Activated CD8-positive, alpha-beta T cell treated with anti-CD3 and anti-CD28 coated beads, Interleukin-2, amount 10 ng/mL, durations not matched to agents 7 days and 5 days (primary cell): ENCODE measurements at regions of chr14 and their contacts with region 1.

Region 1: DNA sequence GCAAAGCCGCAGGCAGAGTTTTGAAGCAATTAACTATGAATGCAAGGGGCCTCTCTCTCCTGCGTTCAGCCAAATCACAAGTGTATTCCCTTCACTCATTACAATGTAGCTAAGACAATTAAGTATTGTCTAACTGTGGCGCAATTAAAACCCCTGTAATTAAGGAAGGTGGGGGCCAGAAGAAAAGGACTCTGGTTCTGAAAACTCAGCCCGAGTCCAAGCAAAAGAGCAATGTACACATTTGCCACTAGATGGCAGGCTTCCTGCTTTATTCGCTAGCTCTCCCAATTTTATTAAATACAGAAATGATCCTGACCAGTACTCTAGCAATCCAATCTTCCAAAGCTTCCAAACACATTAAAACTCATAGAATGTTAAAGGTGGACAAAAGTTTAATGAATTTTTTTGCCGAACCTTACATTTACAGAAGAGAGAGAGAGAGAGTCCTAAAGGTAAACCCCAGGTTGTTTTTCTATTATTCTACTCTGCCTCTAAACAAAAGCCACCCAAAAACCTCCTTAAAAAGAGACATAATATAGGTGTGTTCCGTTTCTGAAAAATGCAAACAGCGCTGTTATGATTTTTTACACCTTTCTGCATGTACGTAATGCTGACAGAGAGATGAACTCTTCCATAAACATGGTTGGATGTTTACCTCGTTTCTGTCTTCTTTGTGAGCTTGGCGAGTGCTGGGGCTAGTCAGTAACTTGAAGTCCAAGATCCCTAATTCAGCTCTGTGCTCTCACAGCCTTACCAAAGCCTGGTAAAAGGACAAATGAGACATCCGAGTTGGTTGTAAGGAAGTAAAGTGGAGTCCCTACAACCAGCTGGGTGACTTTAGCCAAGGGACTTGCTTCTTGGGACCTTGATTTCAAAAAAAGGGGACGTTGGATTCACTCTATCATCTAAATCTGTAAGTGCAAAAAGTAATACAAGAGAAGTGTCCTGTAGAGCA is 50.9 kb upstream of the VASH1 start:
- DNase-seq: peak; percentile 51
- ATAC-seq: no peak
- H3K4me3 Mint-ChIP-seq: no peak overlapping the region
- H3K27ac Mint-ChIP-seq: no peak overlapping the region
- H3K4me1 Mint-ChIP-seq: no peaks in the 10 kb centered on the region
- H3K27me3 Mint-ChIP-seq: peaks cover 11% of the 10 kb centered on the region

Region 2: DNA sequence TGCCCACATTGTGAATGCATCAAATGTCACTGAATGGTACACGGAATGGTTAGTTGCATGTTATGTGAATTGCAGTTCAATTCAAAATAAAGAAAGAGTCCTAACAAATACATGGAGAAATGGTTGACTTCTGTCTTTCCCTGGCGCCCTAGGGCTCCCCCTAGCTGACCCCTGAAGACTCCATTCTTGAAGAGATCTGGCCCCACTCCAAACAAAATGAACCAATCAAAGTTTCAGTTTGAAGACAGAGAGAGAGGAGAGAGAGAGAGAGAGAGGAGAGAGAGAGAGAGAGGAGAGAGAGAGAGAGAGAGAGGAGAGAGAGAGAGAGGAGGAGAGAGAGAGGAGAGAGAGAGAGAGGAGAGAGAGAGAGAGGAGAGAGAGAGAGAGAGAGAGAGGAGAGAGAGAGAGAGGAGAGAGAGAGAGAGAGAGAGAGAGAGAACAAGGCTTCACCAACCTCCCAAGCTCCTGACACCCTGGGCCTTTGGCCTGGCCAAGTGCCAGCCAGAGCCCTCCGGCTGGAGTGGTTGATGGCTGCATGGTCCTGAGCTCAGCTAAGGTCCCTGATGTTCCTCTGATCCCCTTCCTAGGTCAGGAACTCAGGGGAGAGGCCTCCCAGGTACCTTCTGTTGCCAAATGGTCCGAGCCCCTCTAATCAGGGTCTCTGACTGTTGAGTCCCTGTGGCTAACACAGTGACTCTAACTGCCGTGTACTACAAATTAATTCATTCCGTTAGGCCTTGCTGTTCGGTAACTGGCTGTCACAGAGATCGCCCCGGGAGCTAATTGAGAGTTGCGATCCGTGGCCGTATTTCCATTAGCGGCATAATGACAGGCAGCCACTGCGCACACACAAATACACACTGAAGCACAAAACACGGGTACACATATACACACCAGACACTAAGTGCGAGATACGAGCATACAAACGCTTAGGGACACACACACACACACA is 145.6 kb before region 1 on chr14:
- CTCF ChIA-PET with region 1: no interaction called
- POLR2A ChIA-PET with region 1: no interaction called
- DNase-seq: no peak
- ATAC-seq: no peak
- H3K4me3 Mint-ChIP-seq: no peak overlapping the region
- H3K27ac Mint-ChIP-seq: no peak overlapping the region
- H3K4me1 Mint-ChIP-seq: no peaks in the 10 kb centered on the region
- H3K27me3 Mint-ChIP-seq: peaks cover 3% of the 10 kb centered on the region

Region 3: DNA sequence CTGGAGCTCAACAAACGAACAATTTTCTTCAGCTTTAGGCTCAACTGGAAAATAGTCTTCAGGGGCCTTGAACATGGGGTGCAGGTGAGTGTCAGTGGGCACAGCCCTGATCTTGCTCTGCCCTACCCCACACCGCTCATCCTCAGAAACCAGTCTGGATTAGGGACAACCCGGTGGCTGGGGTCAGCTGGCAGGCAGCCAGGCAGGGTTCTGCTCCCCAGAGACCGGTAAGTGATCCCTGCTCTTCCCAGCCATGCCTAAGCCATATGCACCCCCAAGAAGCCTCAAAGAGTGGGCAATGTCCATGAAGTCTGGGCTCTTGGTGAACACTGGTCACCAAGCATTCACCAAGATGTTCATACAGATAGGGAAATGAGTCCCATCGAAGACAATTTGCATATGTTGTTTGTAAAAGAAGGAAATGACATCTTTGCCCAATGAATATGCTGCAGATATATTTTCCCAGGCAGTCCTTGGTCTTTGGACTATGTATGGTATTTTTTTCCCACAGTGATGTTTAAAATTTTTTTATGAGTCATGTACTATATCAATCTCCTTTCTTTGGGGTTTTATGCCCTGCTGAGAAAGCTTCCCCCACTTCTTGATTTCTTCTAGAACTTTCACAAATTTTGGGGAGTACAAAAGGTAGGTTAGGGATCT is 13.0 kb before region 1 on chr14:
- CTCF ChIA-PET with region 1: interaction called, 10 read pairs
- POLR2A ChIA-PET with region 1: no interaction called
- DNase-seq: peak; percentile 6
- ATAC-seq: no peak
- H3K4me3 Mint-ChIP-seq: no peak overlapping the region
- H3K27ac Mint-ChIP-seq: no peak overlapping the region
- H3K4me1 Mint-ChIP-seq: no peaks in the 10 kb centered on the region
- H3K27me3 Mint-ChIP-seq: peaks cover 6% of the 10 kb centered on the region

Region 4: DNA sequence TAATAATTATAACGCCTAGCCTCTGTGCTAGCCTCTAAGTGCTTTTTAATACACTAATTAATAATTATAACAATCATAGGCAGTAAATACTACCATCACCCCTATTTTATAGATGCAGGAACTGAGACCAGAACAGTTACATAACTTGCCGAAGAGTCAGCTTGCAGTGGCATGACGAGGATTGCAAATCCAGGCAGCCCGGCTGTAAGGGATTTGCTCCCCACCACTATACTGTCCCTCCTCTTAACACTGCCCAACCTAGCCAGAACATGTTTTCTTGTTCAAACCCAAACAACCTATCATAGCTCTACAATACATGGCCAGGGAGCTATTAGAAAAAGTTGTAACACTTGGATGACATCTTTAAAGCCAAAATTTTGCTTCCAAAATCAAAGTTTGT is 17.1 kb after region 1 on chr14:
- CTCF ChIA-PET with region 1: interaction called, 18 read pairs
- POLR2A ChIA-PET with region 1: no interaction called
- DNase-seq: no peak
- ATAC-seq: no peak
- H3K4me3 Mint-ChIP-seq: no peak overlapping the region
- H3K27ac Mint-ChIP-seq: no peak overlapping the region
- H3K4me1 Mint-ChIP-seq: no peaks in the 10 kb centered on the region
- H3K27me3 Mint-ChIP-seq: peaks cover 35% of the 10 kb centered on the region

Region 5: DNA sequence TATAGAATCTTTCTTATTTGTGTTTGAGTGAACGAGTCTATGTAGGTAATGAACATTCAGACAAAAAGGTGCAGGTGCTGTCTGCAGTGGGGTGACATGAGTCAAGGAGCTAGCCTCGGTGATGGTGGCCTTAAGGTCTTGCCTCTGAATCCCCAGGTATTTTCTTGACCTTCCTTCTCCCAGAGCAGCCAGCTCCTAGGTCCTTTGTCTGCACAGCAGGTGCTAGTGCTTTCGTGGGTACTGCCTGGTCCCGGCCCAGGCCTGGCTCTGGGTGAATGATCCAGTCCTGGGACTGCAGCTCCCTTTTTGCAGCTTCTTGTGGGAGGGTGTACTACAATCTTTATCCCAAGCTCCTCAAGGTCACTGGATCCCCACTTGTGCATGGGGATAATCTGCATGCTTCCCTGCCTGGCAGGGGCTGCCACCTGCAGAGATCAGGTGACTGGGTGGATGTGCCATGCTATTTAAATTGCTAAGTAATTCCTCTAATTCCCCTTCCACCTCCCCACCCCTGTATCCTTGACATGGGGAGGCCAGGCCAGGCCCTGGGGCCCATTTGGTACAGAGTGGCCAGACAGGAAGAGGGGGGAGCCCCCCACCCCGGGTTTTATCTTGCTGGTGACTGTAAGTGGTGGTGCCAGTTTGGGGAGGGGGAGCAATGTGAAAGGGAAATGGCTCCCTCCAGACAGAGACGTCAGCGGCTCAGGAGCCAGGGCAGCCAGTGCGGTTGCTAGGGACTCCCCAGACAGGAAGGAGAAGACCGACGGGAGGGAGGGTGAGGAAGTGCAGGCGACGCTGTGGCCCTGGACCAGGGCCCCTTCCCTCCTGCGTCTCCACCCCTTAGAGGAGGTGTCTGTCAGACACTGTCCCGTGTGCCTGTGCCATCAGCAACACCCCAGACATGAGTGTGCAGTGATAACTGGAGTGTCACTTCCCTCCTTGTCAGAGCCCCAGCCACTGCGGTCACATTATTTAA is 57.6 kb after region 1 on chr14:
- CTCF ChIA-PET with region 1: interaction called, 12 read pairs
- POLR2A ChIA-PET with region 1: no interaction called
- DNase-seq: peak; percentile 73
- ATAC-seq: peak; percentile 97
- H3K4me3 Mint-ChIP-seq: peak overlapping the region; percentile 23
- H3K27ac Mint-ChIP-seq: peak overlapping the region; percentile 70
- H3K4me1 Mint-ChIP-seq: peaks cover 19% of the 10 kb centered on the region
- H3K27me3 Mint-ChIP-seq: peaks cover 20% of the 10 kb centered on the region

Region 6: DNA sequence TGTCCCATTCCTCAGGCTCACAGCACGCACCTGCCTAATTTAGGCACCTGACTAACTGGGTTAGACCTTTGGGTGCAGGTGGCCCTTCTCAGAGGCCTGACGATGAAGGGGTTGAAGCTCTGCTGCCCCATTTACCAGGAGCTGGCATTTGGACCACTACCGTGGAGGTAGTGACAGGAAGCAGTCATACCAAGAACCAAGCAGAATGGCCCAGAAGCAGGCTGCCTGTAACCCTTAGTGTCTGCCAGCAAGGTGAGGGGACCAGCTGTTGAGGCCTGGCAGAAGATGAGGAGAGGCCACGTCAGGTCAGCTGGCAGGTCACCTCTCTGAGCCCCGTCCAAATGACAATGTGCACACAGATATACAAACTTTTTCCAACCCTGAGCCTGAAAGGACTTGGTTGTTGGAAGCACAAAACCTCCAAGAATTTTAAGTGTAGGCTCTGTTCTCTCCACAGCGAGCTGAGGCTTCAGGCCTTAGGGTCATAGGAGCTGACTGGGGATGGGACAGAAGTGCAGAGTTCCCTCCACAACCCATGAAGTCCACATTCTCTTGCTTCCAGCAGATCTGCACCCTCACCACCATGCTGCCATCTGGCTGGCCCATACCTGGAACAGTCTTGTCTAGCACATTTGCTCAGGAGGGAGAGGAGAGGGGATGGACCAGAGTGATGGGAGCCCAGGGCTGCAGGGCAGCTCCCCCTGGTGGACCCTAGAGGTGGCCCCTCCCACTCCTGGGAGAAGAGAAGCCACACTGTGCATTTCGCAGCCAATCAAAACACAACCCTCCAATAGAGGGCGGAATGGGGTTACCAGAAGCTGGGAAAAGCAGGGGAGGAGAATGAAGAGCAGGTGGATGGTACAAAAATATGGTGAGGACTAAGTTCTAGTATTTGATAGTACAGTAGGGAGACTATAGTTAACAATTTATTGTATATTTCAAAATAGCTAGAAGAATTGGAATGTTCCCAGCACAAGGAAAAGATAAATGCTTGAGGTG is 74.2 kb after region 1 on chr14:
- CTCF ChIA-PET with region 1: interaction called, 104 read pairs
- POLR2A ChIA-PET with region 1: no interaction called
- DNase-seq: peak; percentile 68
- ATAC-seq: peak; percentile 81
- H3K4me3 Mint-ChIP-seq: no peak overlapping the region
- H3K27ac Mint-ChIP-seq: peak overlapping the region; percentile 12
- H3K4me1 Mint-ChIP-seq: peaks cover 50% of the 10 kb centered on the region
- H3K27me3 Mint-ChIP-seq: no peaks in the 10 kb centered on the region

Region 7: DNA sequence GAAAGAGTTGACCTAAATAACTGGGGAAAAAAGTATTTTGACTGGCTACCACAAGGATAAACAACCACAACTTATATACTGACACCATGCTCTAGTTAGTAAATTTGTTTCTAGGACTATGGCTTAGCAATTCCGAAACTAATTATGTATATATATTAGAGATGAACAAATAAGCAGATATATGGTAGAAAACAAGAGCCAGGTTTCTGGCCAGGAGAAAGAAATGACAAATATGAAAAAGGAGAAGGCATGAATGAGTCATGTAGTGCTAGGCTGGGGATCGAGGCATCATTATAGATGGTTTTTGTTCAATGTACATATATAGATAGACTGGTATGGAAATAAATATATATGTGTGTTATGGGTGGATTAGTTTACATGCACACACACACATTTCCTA is 110.4 kb after region 1 on chr14:
- CTCF ChIA-PET with region 1: no interaction called
- POLR2A ChIA-PET with region 1: no interaction called
- DNase-seq: no peak
- ATAC-seq: no peak
- H3K4me3 Mint-ChIP-seq: no peak overlapping the region
- H3K27ac Mint-ChIP-seq: no peak overlapping the region
- H3K4me1 Mint-ChIP-seq: no peaks in the 10 kb centered on the region
- H3K27me3 Mint-ChIP-seq: peaks cover 12% of the 10 kb centered on the region

Region 8: DNA sequence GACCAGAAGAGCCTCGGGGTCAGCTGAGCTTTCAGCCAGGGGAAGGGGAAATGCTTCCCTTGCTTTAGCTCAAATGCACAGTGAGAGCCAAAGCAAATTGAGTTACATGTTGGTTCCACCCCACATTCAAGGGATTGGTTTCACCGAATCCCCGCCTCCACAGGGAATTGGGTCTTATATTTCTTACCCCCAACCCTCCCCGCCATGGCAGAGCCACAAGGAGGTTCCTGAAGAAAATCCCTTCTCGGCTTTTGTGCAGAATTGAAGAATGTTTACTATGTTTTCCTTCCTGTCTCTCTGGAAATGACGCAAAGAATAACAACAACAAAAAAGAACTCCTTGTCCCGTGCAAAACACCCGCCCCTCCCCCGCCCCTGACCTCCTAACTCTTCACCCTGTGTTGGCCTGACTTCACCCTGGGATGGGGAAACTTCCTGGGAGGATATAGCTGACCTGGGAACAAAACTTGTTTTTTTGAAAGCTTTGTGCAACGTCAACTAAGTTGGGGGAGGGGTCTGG is 365.8 kb after region 1 on chr14:
- CTCF ChIA-PET with region 1: interaction called, 27 read pairs
- POLR2A ChIA-PET with region 1: no interaction called
- DNase-seq: no peak
- ATAC-seq: no peak
- H3K4me3 Mint-ChIP-seq: no peak overlapping the region
- H3K27ac Mint-ChIP-seq: no peak overlapping the region
- H3K4me1 Mint-ChIP-seq: no peaks in the 10 kb centered on the region
- H3K27me3 Mint-ChIP-seq: no peaks in the 10 kb centered on the region